A673 (cell line): ENCODE measurements at regions of chr1 and their contacts with region 1.

Region 1: GRCh38 chr1:173988068-173988467 is 34.1 kb downstream of the RC3H1 start:
- DNase-seq: no peak
- H3K4me3 ChIP-seq: no peak overlapping the region
- H3K27ac ChIP-seq: no peak overlapping the region
- H3K4me1 ChIP-seq: no peaks in the 10 kb centered on the region
- H3K27me3 ChIP-seq: no peaks in the 10 kb centered on the region
- CTCF ChIP-seq: no peak

Region 2: GRCh38 chr1:173960625-173961024 is 27.4 kb before region 1 on chr1:
- CTCF ChIA-PET with region 1: no interaction called
- POLR2A ChIA-PET with region 1: interaction called, 12 read pairs
- intact Hi-C with region 1: no loop called
- DNase-seq: no peak
- H3K4me3 ChIP-seq: no peak overlapping the region
- H3K27ac ChIP-seq: no peak overlapping the region
- H3K4me1 ChIP-seq: no peaks in the 10 kb centered on the region
- H3K27me3 ChIP-seq: no peaks in the 10 kb centered on the region
- CTCF ChIP-seq: no peak